Caco-2 (cell line): ENCODE measurements at regions of chr4 and their contacts with region 1.

Region 1: DNA sequence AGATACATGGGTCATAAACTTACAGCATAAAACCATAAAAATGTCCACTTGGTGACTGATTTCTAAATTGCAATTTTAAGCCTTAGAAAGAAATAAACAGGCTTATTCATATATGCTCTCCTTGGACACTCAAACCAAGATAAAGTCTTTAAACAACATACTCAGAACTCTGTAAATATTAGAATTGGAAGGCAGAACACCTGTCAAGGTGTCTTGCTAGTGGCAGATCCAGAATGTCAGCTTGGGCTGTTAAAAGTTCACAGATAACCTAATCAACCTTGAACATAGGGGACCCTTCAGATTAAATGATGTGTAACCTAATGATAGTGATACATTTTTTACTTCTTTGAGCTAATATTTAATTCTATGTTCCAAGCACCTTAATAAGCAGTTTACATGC is 208.2 kb upstream of the ARSJ start:
- DNase-seq: peak; percentile 29 to 34
- H3K4me3 ChIP-seq: no peak overlapping the region
- H3K4me3 Mint-ChIP-seq: no peak overlapping the region
- H3K27ac Mint-ChIP-seq: no peak overlapping the region
- H3K4me1 ChIP-seq: peaks cover 20% of the 10 kb centered on the region
- H3K4me1 Mint-ChIP-seq: peaks cover 6% of the 10 kb centered on the region
- H3K27me3 ChIP-seq: no peaks in the 10 kb centered on the region
- H3K27me3 Mint-ChIP-seq: no peaks in the 10 kb centered on the region
- CTCF ChIP-seq: no peak

Region 2: GRCh38 chr4:113607998-113608397 is 579.6 kb before region 1 on chr4:
- CTCF ChIA-PET with region 1: no interaction called
- POLR2A ChIA-PET with region 1: no interaction called
- intact Hi-C with region 1: no loop called
- DNase-seq: no peak
- H3K4me3 ChIP-seq: no peak overlapping the region
- H3K4me3 Mint-ChIP-seq: no peak overlapping the region
- H3K27ac Mint-ChIP-seq: no peak overlapping the region
- H3K4me1 ChIP-seq: peaks cover 5% of the 10 kb centered on the region; the same call in 1 of the 2 replicates
- H3K4me1 Mint-ChIP-seq: no peaks in the 10 kb centered on the region
- H3K27me3 ChIP-seq: no peaks in the 10 kb centered on the region
- H3K27me3 Mint-ChIP-seq: no peaks in the 10 kb centered on the region
- CTCF ChIP-seq: no peak

Region 3: DNA sequence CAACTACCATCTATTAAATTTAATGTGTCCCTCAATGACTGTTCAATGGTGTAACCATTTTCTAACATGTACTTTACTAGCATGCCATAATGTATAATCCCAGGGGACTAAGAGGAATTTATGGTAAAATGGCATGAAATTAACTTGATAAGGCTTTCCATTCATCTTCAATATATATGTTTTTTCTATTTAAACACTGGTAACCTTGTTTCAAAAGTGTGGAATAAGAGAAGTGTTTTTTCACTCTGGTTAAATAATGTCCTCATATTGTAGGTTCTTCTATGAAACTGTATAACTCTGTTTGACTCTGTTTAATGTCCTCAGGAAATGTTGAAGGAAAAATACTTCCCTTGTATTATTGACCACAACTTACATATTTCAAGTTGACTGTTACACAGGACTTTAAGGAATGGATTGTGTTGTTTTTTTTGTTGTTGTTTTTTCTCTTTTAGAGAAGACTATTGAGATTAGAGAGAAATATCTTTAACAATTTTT is 94.3 kb before region 1 on chr4:
- CTCF ChIA-PET with region 1: no interaction called
- POLR2A ChIA-PET with region 1: no interaction called
- intact Hi-C with region 1: no loop called
- DNase-seq: no peak
- H3K4me3 ChIP-seq: no peak overlapping the region
- H3K4me3 Mint-ChIP-seq: no peak overlapping the region
- H3K27ac Mint-ChIP-seq: no peak overlapping the region
- H3K4me1 ChIP-seq: peaks cover 14% of the 10 kb centered on the region; the same call in 1 of the 2 replicates
- H3K4me1 Mint-ChIP-seq: no peaks in the 10 kb centered on the region
- H3K27me3 ChIP-seq: no peaks in the 10 kb centered on the region
- H3K27me3 Mint-ChIP-seq: no peaks in the 10 kb centered on the region
- CTCF ChIP-seq: no peak

Region 4: DNA sequence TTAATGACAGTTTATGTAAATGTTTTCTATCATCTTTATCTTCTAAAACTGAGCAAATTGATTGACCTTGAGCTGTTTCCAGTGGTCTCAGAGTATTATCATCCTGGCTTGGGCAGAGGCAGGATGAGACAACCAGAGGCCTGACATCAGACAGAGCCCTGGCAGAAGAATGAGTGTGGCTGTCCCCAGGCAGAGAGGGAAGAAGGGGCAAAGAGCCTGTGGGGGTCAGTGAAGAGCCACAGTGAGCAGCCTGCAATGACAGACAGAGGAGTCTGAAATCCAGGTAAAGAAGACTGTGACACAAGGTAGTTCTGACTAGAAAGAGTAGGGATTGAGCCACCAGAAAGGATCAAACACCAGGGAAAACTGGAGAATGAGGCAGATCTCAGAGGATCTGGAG is 25.8 kb before region 1 on chr4:
- CTCF ChIA-PET with region 1: no interaction called
- POLR2A ChIA-PET with region 1: no interaction called
- intact Hi-C with region 1: loop called (anchors 1 kb)
- DNase-seq: peak in 1 of 2 experiments; percentile 34
- H3K4me3 ChIP-seq: no peak overlapping the region
- H3K4me3 Mint-ChIP-seq: no peak overlapping the region
- H3K27ac Mint-ChIP-seq: no peak overlapping the region
- H3K4me1 ChIP-seq: peaks cover 13% of the 10 kb centered on the region
- H3K4me1 Mint-ChIP-seq: no peaks in the 10 kb centered on the region
- H3K27me3 ChIP-seq: no peaks in the 10 kb centered on the region
- H3K27me3 Mint-ChIP-seq: no peaks in the 10 kb centered on the region
- CTCF ChIP-seq: peak in 1 of 2 experiments; percentile 17